Activated CD4-positive, alpha-beta T cell treated with anti-CD3 and anti-CD28 coated beads for 36 hours (primary cell): ENCODE measurements at regions of chr15 and their contacts with region 1.

Region 1: GRCh38 chr15:35444557-35445204 is 101.3 kb downstream of the DPH6 start:
- DNase-seq: peak; percentile 6
- ATAC-seq: no peak
- H3K4me3 Mint-ChIP-seq: no peak overlapping the region
- H3K27ac Mint-ChIP-seq: no peak overlapping the region
- H3K4me1 Mint-ChIP-seq: no peaks in the 10 kb centered on the region
- H3K27me3 Mint-ChIP-seq: no peaks in the 10 kb centered on the region

Region 2: GRCh38 chr15:35078221-35078915 is 366.3 kb before region 1 on chr15:
- CTCF ChIA-PET with region 1: interaction called, 47 read pairs
- POLR2A ChIA-PET with region 1: no interaction called
- intact Hi-C with region 1: loop called (anchors 1 kb)
- DNase-seq: peak; percentile 59
- ATAC-seq: peak; percentile 63
- H3K4me3 Mint-ChIP-seq: no peak overlapping the region
- H3K27ac Mint-ChIP-seq: no peak overlapping the region
- H3K4me1 Mint-ChIP-seq: no peaks in the 10 kb centered on the region
- H3K27me3 Mint-ChIP-seq: peaks cover 7% of the 10 kb centered on the region

Region 3: GRCh38 chr15:35289024-35289617 is 155.6 kb before region 1 on chr15:
- CTCF ChIA-PET with region 1: interaction called, 64 read pairs
- POLR2A ChIA-PET with region 1: no interaction called
- intact Hi-C with region 1: loop called (anchors 1 to 2 kb)
- DNase-seq: no peak
- ATAC-seq: no peak
- H3K4me3 Mint-ChIP-seq: no peak overlapping the region
- H3K27ac Mint-ChIP-seq: no peak overlapping the region
- H3K4me1 Mint-ChIP-seq: no peaks in the 10 kb centered on the region
- H3K27me3 Mint-ChIP-seq: no peaks in the 10 kb centered on the region

Region 4: GRCh38 chr15:35427091-35427490 is 17.6 kb before region 1 on chr15:
- CTCF ChIA-PET with region 1: interaction called, 24 read pairs
- POLR2A ChIA-PET with region 1: no interaction called
- intact Hi-C with region 1: no loop called
- DNase-seq: no peak
- ATAC-seq: no peak
- H3K4me3 Mint-ChIP-seq: no peak overlapping the region
- H3K27ac Mint-ChIP-seq: no peak overlapping the region
- H3K4me1 Mint-ChIP-seq: no peaks in the 10 kb centered on the region
- H3K27me3 Mint-ChIP-seq: no peaks in the 10 kb centered on the region

Region 5: DNA sequence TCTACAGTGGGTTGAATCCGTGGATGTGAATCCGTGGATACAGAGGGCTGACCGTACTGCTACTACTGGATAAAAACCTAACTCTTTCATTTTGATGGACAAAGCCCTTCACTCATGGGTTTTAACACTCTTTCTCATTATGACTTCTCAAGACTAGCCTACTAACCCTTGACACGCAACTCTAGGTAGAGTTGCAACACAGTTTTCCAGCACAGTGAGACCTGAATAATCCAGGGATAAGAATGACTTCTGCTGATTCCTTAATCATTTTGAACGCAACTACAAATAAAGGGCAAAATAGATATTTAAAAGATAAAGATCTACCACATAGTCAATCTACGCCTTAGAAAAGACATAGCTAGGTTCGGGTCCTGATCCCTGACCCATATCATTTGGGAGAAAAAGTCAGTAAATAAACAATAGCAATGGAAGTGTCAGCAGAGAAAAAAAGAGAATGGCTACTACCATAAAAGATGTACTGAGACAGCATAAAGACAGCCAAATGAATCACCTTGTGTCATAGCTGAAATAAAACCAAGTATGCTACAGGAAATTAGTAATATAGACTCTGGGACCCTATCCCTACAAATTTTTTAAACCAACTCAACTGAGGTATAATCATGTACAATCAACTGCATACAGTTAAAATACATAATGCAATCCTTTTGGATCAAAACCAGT is 13.6 kb after region 1 on chr15:
- CTCF ChIA-PET with region 1: interaction called, 19 read pairs
- POLR2A ChIA-PET with region 1: no interaction called
- intact Hi-C with region 1: no loop called
- DNase-seq: no peak
- ATAC-seq: no peak
- H3K4me3 Mint-ChIP-seq: no peak overlapping the region
- H3K27ac Mint-ChIP-seq: no peak overlapping the region
- H3K4me1 Mint-ChIP-seq: no peaks in the 10 kb centered on the region
- H3K27me3 Mint-ChIP-seq: no peaks in the 10 kb centered on the region